ENCODE measurements at regions of chr10 and their contacts with region 1.

Region 1: GRCh38 chr10:95474228-95475002 is 86.8 kb downstream of the SORBS1 start:
- DNase-seq: peak in 4 of 5 donors; percentile 40 to 57 (median 49)
- ATAC-seq: peak; percentile 74 to 82 (median 79)
- H3K4me3 ChIP-seq: peak overlapping the region in 1 of 12 donors; percentile 6
- H3K27ac ChIP-seq: peak overlapping the region; percentile 81 to 98 (median 92)
- H3K4me1 ChIP-seq: peaks cover 10 to 97% (median 67%) of the 10 kb centered on the region in 12 donors
- H3K27me3 ChIP-seq: no peaks in the 10 kb centered on the region
- CTCF ChIP-seq: peak in 4 of 12 donors; percentile 14 to 34 (median 24)
- POLR2A ChIP-seq: peak in 1 of 2 donors; percentile 28

Region 2: GRCh38 chr10:95406651-95407280 is 67.6 kb before region 1 on chr10:
- intact Hi-C with region 1: no loop called
- DNase-seq: peak; percentile 80 to 94 (median 88)
- ATAC-seq: peak; percentile 65 to 83 (median 75)
- H3K4me3 ChIP-seq: no peak overlapping the region
- H3K27ac ChIP-seq: peak overlapping the region; percentile 63 to 98 (median 90)
- H3K4me1 ChIP-seq: peaks cover 20 to 80% (median 64%) of the 10 kb centered on the region in 12 donors
- H3K27me3 ChIP-seq: no peaks in the 10 kb centered on the region
- CTCF ChIP-seq: no peak
- POLR2A ChIP-seq: peak in 1 of 2 donors; percentile 63

Region 3: GRCh38 chr10:95451568-95452524 is 22.6 kb before region 1 on chr10:
- intact Hi-C with region 1: loop called in 1 of 10 experiments (anchors 2 kb)
- DNase-seq: no peak
- ATAC-seq: no peak
- H3K4me3 ChIP-seq: no peak overlapping the region
- H3K27ac ChIP-seq: peak overlapping the region in 11 of 12 donors; percentile 43 to 91 (median 63)
- H3K4me1 ChIP-seq: peaks cover 7 to 89% (median 38%) of the 10 kb centered on the region in 12 donors
- H3K27me3 ChIP-seq: no peaks in the 10 kb centered on the region
- CTCF ChIP-seq: no peak
- POLR2A ChIP-seq: no peak

Region 4: DNA sequence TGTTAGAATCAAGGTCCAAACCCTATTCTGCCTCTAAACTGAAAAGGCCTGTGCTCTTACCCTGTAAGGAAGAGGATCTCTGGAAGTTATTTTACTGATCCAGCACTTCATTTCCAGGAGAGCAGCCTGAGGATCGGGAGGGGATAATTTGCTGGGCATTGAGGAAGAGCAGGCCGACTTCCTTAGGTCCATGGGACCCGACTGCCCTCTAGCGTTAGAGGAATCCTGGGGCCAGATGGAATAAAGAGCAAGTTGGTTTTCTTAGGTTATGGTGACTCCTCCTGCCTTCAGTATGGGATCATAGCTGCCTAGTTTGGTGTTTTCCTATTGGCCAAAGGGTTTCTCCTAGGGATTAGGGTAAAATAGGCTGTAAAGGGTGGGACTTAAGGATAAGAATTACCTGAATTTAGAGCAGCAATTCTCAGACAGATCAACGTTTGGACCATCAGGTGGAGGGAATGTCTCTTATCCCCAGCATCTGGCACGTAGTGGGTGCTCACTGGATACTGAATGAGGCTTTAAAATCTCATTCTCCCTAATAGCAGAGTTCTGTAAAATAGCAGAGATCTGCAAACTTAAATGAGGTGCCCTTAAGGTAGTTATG is 126.8 kb after region 1 on chr10:
- intact Hi-C with region 1: loop called in 1 of 10 experiments (anchors 5 kb)
- DNase-seq: peak; percentile 70 to 83 (median 79)
- ATAC-seq: peak; percentile 66 to 91 (median 86)
- H3K4me3 ChIP-seq: no peak overlapping the region
- H3K27ac ChIP-seq: peak overlapping the region in 5 of 12 donors; percentile 26 to 79 (median 48)
- H3K4me1 ChIP-seq: peaks cover 0 to 33% (median 12%) of the 10 kb centered on the region in 12 donors
- H3K27me3 ChIP-seq: no peaks in the 10 kb centered on the region
- CTCF ChIP-seq: peak; percentile 86 to 99 (median 96)
- POLR2A ChIP-seq: no peak